Vagina (tissue), 2 donors: ENCODE measurements at regions of chr1 and their contacts with region 1.

Region 1: DNA sequence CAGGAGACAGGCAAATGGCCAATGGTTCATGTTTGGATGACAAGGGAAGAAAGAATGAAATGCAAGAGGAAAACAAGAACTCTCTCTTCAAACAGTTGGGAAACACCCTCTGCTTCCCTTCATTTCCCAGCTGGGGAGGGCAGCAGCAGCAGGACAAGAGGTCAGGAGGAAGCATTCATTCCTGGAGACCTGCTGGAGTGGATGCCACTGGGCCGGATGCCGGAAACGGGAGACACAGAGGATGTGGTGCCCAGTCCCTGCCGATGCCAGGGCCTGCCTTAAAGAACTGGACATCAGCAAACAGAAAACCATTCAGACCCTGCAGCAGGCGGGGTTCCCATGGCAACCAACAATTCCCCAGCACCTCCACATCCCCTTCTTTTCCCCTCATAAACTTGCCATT is 102.3 kb upstream of the ZNF648 start:
- DNase-seq: no peak
- H3K4me3 ChIP-seq: no peak overlapping the region
- H3K27ac ChIP-seq: peak overlapping the region; percentile 59
- H3K4me1 ChIP-seq: peaks cover 16% of the 10 kb centered on the region
- H3K27me3 ChIP-seq: no peaks in the 10 kb centered on the region
- CTCF ChIP-seq: no peak
- POLR2A ChIP-seq: no peak

Region 2: DNA sequence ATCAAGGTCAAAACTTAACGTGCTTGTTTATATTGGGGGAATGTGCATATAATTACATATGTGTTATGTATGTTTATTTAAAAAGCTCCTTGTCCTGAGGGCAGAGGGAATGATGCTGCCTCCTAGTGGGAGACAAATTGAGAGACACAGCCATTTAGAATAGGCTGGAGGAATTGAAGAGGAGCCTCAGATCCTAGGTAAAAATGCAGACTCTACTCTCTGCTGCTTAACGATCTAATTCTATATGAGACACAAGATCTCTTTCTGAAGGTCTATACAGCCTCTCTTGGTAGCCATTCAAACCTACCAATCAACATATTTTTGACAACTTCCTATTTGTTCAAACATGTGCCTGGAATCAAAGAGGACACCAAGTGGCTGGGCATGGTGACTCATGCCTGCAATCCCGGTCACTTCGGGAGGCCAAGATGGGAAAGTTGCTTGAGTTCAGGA is 34.3 kb after region 1 on chr1:
- intact Hi-C with region 1: loop called (anchors 5 kb)
- DNase-seq: no peak
- H3K4me3 ChIP-seq: no peak overlapping the region
- H3K27ac ChIP-seq: peak overlapping the region; percentile 75
- H3K4me1 ChIP-seq: peaks cover 26% of the 10 kb centered on the region
- H3K27me3 ChIP-seq: no peaks in the 10 kb centered on the region
- CTCF ChIP-seq: peak in 1 of 3 experiments; percentile 13
- POLR2A ChIP-seq: no peak

Region 3: GRCh38 chr1:182552527-182552926 is 388.7 kb after region 1 on chr1:
- intact Hi-C with region 1: no loop called
- DNase-seq: no peak
- H3K4me3 ChIP-seq: no peak overlapping the region
- H3K27ac ChIP-seq: no peak overlapping the region
- H3K4me1 ChIP-seq: no peaks in the 10 kb centered on the region
- H3K27me3 ChIP-seq: no peaks in the 10 kb centered on the region
- CTCF ChIP-seq: no peak
- POLR2A ChIP-seq: no peak